ENCODE measurements at regions of chr1 and their contacts with region 1.

Region 1: GRCh38 chr1:205325334-205325884 is 3.9 kb upstream of the NUAK2 start:
- DNase-seq: peak; percentile 72
- H3K4me3 ChIP-seq: no peak overlapping the region
- H3K27ac ChIP-seq: no peak overlapping the region
- H3K4me1 ChIP-seq: no peaks in the 10 kb centered on the region
- H3K27me3 ChIP-seq: peaks cover 9% of the 10 kb centered on the region
- CTCF ChIP-seq: peak; percentile 70

Region 2: DNA sequence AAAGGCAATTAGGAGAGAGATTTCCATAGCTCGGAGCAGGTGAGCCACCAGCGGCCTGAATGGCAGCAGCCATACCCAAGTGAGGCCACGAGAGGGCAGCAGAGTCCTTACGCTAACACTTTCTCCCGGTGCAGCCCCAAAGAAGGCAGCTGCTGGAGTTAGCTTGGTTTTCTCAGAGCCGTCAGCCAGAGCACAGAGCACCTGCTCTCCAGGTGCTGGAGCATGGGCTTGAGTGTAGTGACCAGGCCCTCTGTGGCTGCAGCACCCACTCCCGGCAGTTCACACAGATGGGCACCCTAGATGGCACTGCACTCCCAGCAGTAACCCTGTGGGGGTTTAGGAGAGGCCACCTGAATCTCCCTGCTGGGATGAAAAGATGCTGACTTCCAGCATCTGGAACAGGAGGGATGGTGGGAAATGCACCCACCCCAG is 51.8 kb before region 1 on chr1:
- CTCF ChIA-PET with region 1: interaction called, 165 read pairs
- POLR2A ChIA-PET with region 1: no interaction called
- intact Hi-C with region 1: loop called (anchors 1 kb)
- DNase-seq: peak; percentile 77
- H3K4me3 ChIP-seq: no peak overlapping the region
- H3K27ac ChIP-seq: no peak overlapping the region
- H3K4me1 ChIP-seq: no peaks in the 10 kb centered on the region
- H3K27me3 ChIP-seq: no peaks in the 10 kb centered on the region
- CTCF ChIP-seq: peak; percentile 96

Region 3: DNA sequence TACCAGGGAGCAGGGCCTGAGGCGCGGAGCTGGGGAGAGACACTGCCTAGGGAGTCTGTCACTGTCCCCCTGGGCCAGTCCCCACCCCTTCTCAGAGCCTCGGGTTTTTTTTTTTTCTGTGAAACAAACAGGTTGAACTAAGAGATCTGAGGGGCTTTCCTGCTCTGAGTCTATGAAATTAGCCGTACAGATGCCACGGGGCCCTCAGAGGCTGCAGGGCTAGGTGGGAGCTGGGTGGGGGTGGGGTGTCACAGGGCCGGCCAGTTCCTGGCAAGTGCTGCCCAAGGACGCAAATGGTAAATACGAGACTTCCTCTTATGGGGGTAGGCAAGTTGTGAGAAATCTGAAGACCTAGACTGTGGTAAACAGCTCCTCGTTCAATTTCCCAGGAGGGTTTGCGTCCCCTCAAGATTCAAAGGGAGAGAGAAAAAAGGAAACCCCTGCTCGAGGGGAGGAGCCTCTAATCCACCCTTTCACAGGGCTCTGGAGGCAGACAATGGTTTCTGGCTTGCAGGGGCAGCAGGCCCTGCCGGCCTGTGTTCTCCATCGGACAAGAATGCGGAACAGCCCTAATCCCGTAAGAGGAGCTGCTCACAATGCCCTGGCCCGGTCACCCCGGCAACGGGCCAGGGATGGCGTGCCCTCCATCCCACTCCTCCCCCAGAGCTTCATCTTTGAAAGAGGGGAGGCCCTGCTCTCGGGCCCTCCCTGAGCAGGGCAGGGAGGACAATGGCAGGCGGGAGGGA is 11.7 kb before region 1 on chr1:
- CTCF ChIA-PET with region 1: no interaction called
- POLR2A ChIA-PET with region 1: no interaction called
- intact Hi-C with region 1: no loop called
- DNase-seq: peak; percentile 26
- H3K4me3 ChIP-seq: no peak overlapping the region
- H3K27ac ChIP-seq: no peak overlapping the region
- H3K4me1 ChIP-seq: peaks cover 11% of the 10 kb centered on the region
- H3K27me3 ChIP-seq: no peaks in the 10 kb centered on the region
- CTCF ChIP-seq: no peak